T-cell (primary cell): ENCODE measurements at regions of chr14 and their contacts with region 1.

Region 1: GRCh38 chr14:75976826-75977581 is 4.8 kb downstream of the TGFB3 start:
- DNase-seq: no peak
- ATAC-seq: no peak
- H3K4me3 ChIP-seq: no peak overlapping the region
- H3K4me3 Mint-ChIP-seq: no peak overlapping the region
- H3K27ac ChIP-seq: no peak overlapping the region
- H3K27ac Mint-ChIP-seq: no peak overlapping the region
- H3K4me1 ChIP-seq: peaks cover 3 to 30% of the 10 kb centered on the region in 2 experiments
- H3K4me1 Mint-ChIP-seq: peaks cover 38 to 42% (median 39%) of the 10 kb centered on the region in 3 donors
- H3K27me3 ChIP-seq: no peaks in the 10 kb centered on the region
- H3K27me3 Mint-ChIP-seq: no peaks in the 10 kb centered on the region

Region 2: GRCh38 chr14:75709207-75709812 is 267.7 kb before region 1 on chr14:
- CTCF ChIA-PET with region 1: interaction called, 5 to 67 read pairs
- POLR2A ChIA-PET with region 1: no interaction called
- DNase-seq: peak; percentile 5 to 79 (median 53)
- ATAC-seq: peak; percentile 43 to 74 (median 64)
- H3K4me3 ChIP-seq: no peak overlapping the region
- H3K4me3 Mint-ChIP-seq: no peak overlapping the region
- H3K27ac ChIP-seq: no peak overlapping the region
- H3K27ac Mint-ChIP-seq: no peak overlapping the region
- H3K4me1 ChIP-seq: no peaks in the 10 kb centered on the region
- H3K4me1 Mint-ChIP-seq: no peaks in the 10 kb centered on the region
- H3K27me3 ChIP-seq: no peaks in the 10 kb centered on the region
- H3K27me3 Mint-ChIP-seq: no peaks in the 10 kb centered on the region